Mammary epithelial cell (primary cell): ENCODE measurements at regions of chr12 and their contacts with region 1.

Region 1: GRCh38 chr12:122166422-122167349 is 7.3 kb downstream of the IL31 start:
- DNase-seq: no peak
- H3K4me3 ChIP-seq: no peak overlapping the region
- H3K27ac ChIP-seq: no peak overlapping the region
- H3K4me1 ChIP-seq: no peaks in the 10 kb centered on the region
- H3K27me3 ChIP-seq: no peaks in the 10 kb centered on the region
- CTCF ChIP-seq: no peak

Region 2: DNA sequence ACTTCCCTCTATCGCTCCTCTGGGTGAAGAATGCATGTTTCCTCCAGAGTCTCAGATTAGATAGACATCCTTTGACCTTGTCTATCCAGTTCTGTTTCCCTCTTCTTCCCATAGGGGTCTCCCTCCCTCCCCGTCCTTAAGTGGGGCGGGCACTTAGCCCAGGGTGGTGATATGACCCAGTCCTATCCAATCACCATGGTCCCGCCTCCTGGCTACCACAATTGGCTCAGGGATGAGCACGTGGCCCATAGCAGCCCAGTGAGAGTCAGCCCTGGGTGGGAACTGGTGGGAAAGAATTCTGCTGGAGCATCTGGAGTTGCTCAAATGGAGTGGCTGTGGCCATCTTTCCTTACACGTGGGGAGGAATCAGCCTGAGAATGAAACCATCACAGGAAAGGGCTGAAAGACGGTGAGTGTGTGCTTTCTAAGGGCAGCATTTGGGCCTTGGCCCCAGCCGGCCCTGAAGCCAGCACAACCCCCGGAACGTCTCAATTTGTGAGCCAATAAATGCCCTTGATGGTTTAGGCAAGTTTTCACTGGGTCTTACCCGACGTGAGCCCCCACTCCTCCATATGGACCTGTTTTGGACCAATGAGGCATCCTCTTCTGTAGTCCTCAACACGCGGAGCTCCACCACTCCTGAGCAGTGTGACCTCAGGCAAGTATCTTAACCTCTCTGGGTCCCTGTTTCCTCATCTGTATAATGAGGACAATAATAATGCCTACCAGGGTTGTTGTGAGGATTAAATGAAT is 102.5 kb before region 1 on chr12:
- CTCF ChIA-PET with region 1: no interaction called
- dilution Hi-C with region 1: loop called (anchors 10 kb)
- in situ Hi-C with region 1: no loop called
- intact Hi-C with region 1: no loop called
- DNase-seq: peak; percentile 37
- H3K4me3 ChIP-seq: no peak overlapping the region
- H3K27ac ChIP-seq: no peak overlapping the region
- H3K4me1 ChIP-seq: peaks cover 16% of the 10 kb centered on the region
- H3K27me3 ChIP-seq: no peaks in the 10 kb centered on the region
- CTCF ChIP-seq: peak; percentile 10 to 21

Region 3: DNA sequence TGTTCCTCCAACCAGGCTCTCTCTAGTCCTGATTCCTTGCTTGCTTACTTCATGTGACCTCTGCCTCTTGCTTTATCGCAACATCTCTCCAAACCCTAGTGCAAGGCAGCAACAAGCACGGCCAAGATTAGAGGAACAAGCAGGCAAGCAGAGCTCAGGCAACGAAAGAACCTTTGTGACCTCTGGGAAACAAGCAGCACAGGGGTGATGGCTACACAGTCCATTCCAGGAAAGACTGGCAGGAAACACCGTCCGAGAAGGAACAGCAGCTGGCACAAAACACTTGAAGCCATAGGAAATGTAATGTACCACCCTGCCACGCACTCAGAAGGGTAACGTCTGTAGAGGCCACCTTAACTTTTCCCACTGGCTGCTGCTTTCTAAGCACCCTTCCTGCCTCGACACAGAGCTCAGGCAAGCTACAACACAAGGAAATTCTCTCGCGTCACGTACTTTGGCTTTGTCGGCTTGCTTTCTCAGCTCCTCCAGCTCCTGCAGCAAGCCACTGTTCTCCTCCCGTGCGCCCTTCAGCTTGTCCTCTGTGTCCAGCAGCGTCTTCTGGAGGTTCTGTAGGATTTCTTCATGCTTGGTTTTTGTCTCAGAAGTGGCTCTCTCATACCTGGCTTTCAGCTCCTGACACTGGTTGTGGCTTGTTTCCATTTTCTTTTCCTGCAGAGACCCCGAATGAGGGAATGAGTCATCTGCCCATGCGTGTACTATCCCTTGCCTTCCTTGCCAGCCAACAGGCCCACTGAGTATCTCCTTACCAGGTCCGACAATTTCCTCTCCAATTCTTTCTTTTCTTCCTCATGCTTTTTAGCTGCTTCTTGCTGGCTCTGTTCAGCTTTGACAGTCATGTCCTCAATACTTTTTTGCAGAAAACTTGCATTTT is 161.1 kb after region 1 on chr12:
- CTCF ChIA-PET with region 1: interaction called, 17 read pairs
- dilution Hi-C with region 1: no loop called
- in situ Hi-C with region 1: no loop called
- intact Hi-C with region 1: no loop called
- DNase-seq: no peak
- H3K4me3 ChIP-seq: no peak overlapping the region
- H3K27ac ChIP-seq: no peak overlapping the region
- H3K4me1 ChIP-seq: no peaks in the 10 kb centered on the region
- H3K27me3 ChIP-seq: no peaks in the 10 kb centered on the region
- CTCF ChIP-seq: no peak